MCF 10A (cell line): ENCODE measurements at regions of chr5 and their contacts with region 1.

Region 1: GRCh38 chr5:135560858-135561257 is 17.9 kb downstream of the CXCL14 start:
- DNase-seq: peak; percentile 91
- H3K4me3 Mint-ChIP-seq: no peak overlapping the region
- H3K27ac Mint-ChIP-seq: no peak overlapping the region
- H3K4me1 Mint-ChIP-seq: peaks cover 6% of the 10 kb centered on the region
- H3K27me3 Mint-ChIP-seq: peaks cover 37% of the 10 kb centered on the region
- CTCF ChIP-seq: peak; percentile 94

Region 2: DNA sequence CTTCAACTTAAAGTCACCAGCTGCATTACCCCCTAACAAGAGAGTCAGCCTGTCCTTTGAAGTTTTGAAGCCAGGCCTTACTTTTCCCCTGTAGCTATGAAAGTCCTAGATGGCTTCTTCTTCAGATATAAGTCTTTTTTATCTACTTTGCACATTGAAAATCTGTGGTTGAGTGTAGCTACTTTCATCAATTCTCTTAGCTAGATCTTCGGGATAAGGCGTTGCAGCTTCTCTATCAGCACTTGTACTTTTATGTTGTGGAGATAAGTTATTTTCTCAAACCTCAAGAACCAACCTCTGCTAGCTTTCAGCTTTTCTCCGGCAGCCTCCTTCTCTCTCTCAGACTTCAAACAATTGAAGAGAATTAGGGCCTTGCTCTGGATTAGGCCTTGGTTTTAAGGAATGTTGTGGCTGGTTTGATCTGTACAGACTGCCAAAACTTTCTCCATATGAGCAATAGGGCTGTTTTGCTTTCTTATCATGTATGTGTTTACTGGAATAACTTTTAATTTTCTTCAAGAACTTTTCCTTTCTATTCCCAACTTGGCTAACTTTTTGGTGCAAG is 571.5 kb before region 1 on chr5:
- CTCF ChIA-PET with region 1: no interaction called
- POLR2A ChIA-PET with region 1: no interaction called
- intact Hi-C with region 1: no loop called
- DNase-seq: no peak
- H3K4me3 Mint-ChIP-seq: no peak overlapping the region
- H3K27ac Mint-ChIP-seq: no peak overlapping the region
- H3K4me1 Mint-ChIP-seq: no peaks in the 10 kb centered on the region
- H3K27me3 Mint-ChIP-seq: peaks cover 8% of the 10 kb centered on the region
- CTCF ChIP-seq: no peak

Region 3: GRCh38 chr5:135651150-135651549 is 90.3 kb after region 1 on chr5:
- CTCF ChIA-PET with region 1: interaction called, 22 read pairs
- POLR2A ChIA-PET with region 1: interaction called, 6 read pairs
- intact Hi-C with region 1: no loop called
- DNase-seq: peak; percentile 99
- H3K4me3 Mint-ChIP-seq: no peak overlapping the region
- H3K27ac Mint-ChIP-seq: peak overlapping the region; percentile 29
- H3K4me1 Mint-ChIP-seq: peaks cover 21% of the 10 kb centered on the region
- H3K27me3 Mint-ChIP-seq: no peaks in the 10 kb centered on the region
- CTCF ChIP-seq: no peak

Region 4: DNA sequence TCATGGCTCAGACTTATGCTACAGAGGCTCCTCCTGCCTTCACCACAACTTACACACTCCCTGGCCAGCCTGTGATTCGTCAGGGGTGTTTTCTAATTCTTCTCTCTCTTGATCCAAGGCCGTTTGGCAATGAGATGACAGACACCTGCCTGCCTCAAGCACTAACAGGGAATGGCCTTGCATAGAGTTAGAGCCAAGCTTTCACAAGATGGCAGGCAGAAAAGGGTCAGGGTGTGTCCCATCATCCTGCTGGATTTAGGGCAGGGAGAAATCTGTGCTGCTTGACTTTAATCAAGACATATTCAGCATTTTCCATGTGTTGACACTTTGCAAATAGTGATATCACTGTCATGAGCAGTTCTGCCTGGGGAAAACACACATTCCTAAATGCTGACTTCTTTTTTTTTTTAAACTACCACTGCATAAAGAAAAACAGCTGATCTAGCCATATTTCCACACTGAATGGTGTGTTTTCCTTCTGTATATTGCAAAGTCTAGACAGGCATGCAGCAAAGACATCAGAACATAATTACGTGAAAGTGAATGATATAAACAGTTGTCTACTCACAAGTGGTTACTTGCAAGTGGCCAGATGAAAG is 178.6 kb after region 1 on chr5:
- CTCF ChIA-PET with region 1: interaction called, 476 read pairs
- POLR2A ChIA-PET with region 1: no interaction called
- intact Hi-C with region 1: no loop called
- DNase-seq: no peak
- H3K4me3 Mint-ChIP-seq: no peak overlapping the region
- H3K27ac Mint-ChIP-seq: peak overlapping the region; percentile 20
- H3K4me1 Mint-ChIP-seq: peaks cover 5% of the 10 kb centered on the region
- H3K27me3 Mint-ChIP-seq: peaks cover 22% of the 10 kb centered on the region
- CTCF ChIP-seq: no peak

Region 5: DNA sequence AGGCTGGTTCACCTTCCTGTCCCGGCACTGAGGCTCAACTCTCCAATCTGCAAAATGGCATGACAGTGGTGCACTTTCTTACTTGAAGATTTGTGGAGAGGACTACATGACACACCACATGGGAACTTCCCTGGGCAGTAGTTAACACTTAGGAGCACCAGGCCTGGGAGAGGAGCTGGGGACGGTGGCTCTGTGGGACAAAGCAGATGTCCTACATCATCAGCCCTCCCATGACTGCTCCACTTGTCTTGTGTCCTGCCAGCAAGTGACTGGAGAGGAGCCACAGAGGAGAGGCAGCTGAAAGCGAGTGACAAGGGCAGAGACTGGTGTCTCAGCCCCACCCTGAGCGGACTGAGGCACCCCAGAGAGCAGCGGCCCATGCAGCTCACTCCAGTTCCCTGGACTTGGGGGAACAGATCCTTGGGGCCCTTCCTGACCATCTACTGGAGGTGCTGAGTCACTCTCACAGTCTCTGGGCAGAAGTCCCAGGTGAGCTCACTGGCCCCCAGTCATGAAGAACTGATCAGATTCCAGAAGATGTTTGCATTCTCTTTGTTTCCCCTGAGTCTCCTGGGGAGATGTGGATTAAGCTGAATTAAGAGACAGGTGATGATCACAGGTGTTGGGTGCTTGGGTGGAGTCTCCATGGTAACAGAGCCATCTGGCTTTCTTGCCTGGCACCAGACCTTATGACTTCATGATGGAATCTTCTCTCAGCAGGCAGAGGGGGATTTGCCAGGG is 260.4 kb after region 1 on chr5:
- CTCF ChIA-PET with region 1: interaction called, 482 read pairs
- POLR2A ChIA-PET with region 1: no interaction called
- intact Hi-C with region 1: no loop called
- DNase-seq: peak; percentile 49
- H3K4me3 Mint-ChIP-seq: no peak overlapping the region
- H3K27ac Mint-ChIP-seq: no peak overlapping the region
- H3K4me1 Mint-ChIP-seq: no peaks in the 10 kb centered on the region
- H3K27me3 Mint-ChIP-seq: peaks cover 16% of the 10 kb centered on the region
- CTCF ChIP-seq: no peak

Region 6: DNA sequence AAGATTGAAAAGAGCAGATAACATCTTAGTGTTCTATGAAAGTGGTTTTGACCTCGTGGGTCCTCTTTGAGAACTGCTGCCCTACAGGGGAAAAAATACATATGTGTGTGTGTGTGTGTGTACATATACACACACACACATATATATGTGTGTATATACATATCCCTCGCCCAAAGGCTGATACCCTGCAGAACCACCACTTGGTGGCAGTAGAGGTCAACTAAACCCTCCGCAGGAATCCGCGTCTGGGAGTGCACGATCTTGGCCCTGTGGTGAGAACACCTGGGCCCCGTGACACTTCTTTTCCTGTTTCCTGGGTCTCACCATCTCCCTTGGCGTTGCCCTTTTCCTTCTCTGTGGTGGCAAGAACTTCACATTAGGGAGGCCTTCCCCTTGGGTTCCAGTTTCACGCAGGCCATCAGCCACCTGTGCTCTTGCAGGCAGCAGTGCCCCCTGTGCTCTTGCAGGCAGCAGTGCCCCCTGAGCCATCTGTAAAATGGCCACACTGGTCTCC is 326.6 kb after region 1 on chr5:
- CTCF ChIA-PET with region 1: interaction called, 12 read pairs
- POLR2A ChIA-PET with region 1: no interaction called
- intact Hi-C with region 1: loop called (anchors 5 kb)
- DNase-seq: peak; percentile 90
- H3K4me3 Mint-ChIP-seq: no peak overlapping the region
- H3K27ac Mint-ChIP-seq: no peak overlapping the region
- H3K4me1 Mint-ChIP-seq: no peaks in the 10 kb centered on the region
- H3K27me3 Mint-ChIP-seq: peaks cover 37% of the 10 kb centered on the region
- CTCF ChIP-seq: peak; percentile 96

Region 7: DNA sequence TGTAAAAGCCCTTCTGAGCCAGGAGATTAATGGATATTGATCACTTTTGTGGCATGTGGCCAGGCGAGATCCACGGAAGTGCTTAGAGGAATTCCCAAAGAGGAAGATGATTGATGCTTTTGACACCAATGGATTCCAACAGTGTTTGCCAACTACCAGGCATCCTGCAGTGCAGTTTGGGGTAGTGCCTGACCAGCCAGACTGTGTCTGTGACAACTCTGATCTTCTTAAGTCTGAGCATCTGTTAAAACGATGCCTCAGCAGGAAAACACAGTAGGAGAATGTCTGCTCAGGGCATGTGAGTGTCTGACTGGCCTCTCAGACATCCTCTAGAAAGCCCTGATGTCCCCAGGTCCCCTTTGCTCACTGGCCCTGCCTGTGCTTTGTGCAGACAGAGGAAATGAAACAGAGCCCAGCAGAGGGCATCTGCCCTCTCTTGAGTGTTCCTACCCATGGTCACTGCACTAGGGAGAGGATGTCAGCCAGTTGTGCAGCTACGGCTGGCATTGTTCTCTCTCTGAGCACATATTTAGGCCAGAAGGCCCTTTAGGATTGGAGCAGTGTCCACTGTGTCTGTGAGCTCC is 747.4 kb after region 1 on chr5:
- CTCF ChIA-PET with region 1: no interaction called
- POLR2A ChIA-PET with region 1: no interaction called
- intact Hi-C with region 1: no loop called
- DNase-seq: peak; percentile 24
- H3K4me3 Mint-ChIP-seq: no peak overlapping the region
- H3K27ac Mint-ChIP-seq: no peak overlapping the region
- H3K4me1 Mint-ChIP-seq: no peaks in the 10 kb centered on the region
- H3K27me3 Mint-ChIP-seq: peaks cover 41% of the 10 kb centered on the region
- CTCF ChIP-seq: peak; percentile 6